Gastrocnemius medialis (tissue), 4 donors: ENCODE measurements at regions of chr6 and their contacts with region 1.

Region 1: GRCh38 chr6:28895134-28895812 is 28.5 kb downstream of the TRIM27 start:
- DNase-seq: peak; percentile 88 to 93
- ATAC-seq: peak; percentile 85 to 88
- H3K4me3 ChIP-seq: peak overlapping the region; percentile 67 to 90 (median 76)
- H3K27ac ChIP-seq: peak overlapping the region; percentile 89 to 98 (median 96)
- H3K4me1 ChIP-seq: peaks cover 7% of the 10 kb centered on the region in 2 donors
- H3K27me3 ChIP-seq: no peaks in the 10 kb centered on the region
- CTCF ChIP-seq: no peak
- POLR2A ChIP-seq: peak; percentile 62 to 64

Region 2: GRCh38 chr6:28349892-28350737 is 545.2 kb before region 1 on chr6 and contains the start of gene ZKSCAN3:
- in situ Hi-C with region 1: no loop called
- intact Hi-C with region 1: loop called (anchors 5 kb)
- DNase-seq: peak; percentile 59 to 75
- ATAC-seq: peak; percentile 91 to 92
- H3K4me3 ChIP-seq: peak within 1 kb of the TSS; percentile 75 to 91 (median 84)
- H3K27ac ChIP-seq: peak within 1 kb of the TSS; percentile 75 to 83 (median 80)
- H3K4me1 ChIP-seq: peaks cover 24 to 48% of the 10 kb centered on the region in 2 donors
- H3K27me3 ChIP-seq: no peaks in the 10 kb centered on the region
- CTCF ChIP-seq: no peak
- POLR2A ChIP-seq: peak in 1 of 2 donors; percentile 17
- total RNA-seq, gene ZKSCAN3: 1.5 to 4.5 (median 2.4) TPM

Region 3: DNA sequence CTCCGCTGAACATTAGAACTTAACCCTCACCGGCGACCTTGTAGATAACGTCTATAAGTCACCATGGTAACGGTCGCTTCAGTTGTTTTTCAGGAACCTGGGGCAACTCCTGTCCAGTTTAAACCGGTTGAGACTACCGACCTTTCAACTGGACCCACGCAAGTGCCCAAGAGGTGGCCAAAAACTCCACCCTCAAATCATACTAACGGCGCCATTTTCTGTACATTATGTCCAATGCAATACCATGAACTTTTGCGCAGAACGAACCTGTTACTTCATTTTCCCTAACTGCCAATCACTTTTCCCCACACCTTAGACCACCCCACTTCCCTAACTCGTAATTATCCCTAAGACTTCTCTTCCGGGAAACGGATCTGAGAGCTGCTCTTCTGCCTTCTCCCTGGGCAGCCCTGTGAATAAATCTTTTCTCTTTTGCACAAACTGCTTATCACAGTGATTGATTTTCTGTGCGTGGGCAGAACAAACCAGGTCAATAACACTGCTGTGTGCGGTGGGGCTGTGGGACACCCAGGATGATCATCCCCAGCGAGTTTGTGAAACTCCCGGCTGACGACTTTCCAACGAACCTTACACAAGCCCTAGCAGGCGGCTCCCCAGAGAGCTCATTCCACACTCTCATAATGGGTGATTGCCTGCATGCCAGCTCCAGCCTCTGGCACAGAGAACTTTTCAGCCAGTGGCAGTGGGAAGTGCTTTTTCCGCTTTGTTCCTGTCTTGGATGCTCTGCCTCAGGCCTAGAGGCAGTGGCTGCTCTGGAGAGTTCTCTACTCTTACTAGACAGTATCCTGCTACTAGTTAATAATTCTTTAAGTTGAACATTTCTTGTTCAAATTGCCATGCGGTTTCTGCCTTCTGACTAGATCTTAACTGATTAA is 341.0 kb before region 1 on chr6:
- in situ Hi-C with region 1: no loop called
- intact Hi-C with region 1: no loop called
- DNase-seq: no peak
- ATAC-seq: no peak
- H3K4me3 ChIP-seq: no peak overlapping the region
- H3K27ac ChIP-seq: no peak overlapping the region
- H3K4me1 ChIP-seq: no peaks in the 10 kb centered on the region
- H3K27me3 ChIP-seq: no peaks in the 10 kb centered on the region
- CTCF ChIP-seq: no peak
- POLR2A ChIP-seq: no peak

Region 4: GRCh38 chr6:28838634-28839442 is 56.4 kb before region 1 on chr6:
- in situ Hi-C with region 1: no loop called
- intact Hi-C with region 1: loop called (anchors 1 kb)
- DNase-seq: peak; percentile 20 to 22
- ATAC-seq: peak; percentile 42 to 63
- H3K4me3 ChIP-seq: peak overlapping the region; percentile 46 to 81 (median 55)
- H3K27ac ChIP-seq: peak overlapping the region in 3 of 4 donors; percentile 8 to 51 (median 28)
- H3K4me1 ChIP-seq: peaks cover 0 to 12% of the 10 kb centered on the region in 2 donors
- H3K27me3 ChIP-seq: peaks cover 19 to 40% (median 20%) of the 10 kb centered on the region in 3 donors
- CTCF ChIP-seq: peak in 2 of 5 experiments; percentile 29 to 43
- POLR2A ChIP-seq: no peak

Region 5: DNA sequence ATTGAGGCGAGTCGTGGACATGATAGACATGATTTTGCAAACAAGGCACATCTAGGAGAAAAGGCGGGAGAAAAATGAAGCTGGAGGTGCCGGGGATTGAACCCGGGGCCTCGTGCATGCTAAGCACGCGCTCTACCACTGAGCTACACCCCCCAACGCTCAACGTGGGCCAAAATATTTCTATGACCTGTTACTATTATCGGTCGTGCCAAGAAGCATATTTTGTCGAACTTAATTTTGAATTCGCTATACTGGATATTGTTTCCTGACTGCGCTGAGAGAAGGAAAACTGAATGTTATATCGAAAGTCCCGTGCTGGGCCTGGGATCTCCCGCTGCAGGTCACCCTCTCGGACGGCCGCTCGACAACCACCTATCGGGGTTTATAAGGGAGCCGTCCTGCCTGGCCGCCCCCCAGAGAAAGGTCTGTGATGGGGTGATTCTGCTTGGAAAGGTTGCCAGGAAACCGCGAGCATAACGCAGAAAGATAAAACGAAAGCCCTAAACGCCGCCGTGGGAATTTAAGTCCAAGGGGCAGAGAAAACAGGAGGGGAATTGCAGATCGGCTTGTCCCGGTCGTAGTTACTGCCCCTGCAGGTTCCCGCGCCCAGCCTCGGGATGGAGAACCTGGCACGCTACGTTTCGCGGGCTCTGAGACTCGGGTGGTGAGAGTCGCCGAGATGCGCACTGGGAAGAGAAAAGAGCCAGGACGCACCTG is 31.5 kb before region 1 on chr6:
- in situ Hi-C with region 1: no loop called
- intact Hi-C with region 1: loop called (anchors 5 kb)
- DNase-seq: peak; percentile 16 to 39
- ATAC-seq: peak; percentile 77
- H3K4me3 ChIP-seq: peak overlapping the region; percentile 61 to 77 (median 72)
- H3K27ac ChIP-seq: peak overlapping the region in 3 of 4 donors; percentile 31 to 43 (median 37)
- H3K4me1 ChIP-seq: peaks cover 0 to 19% of the 10 kb centered on the region in 2 donors
- H3K27me3 ChIP-seq: peaks cover 0 to 35% (median 3%) of the 10 kb centered on the region in 3 donors
- CTCF ChIP-seq: no peak
- POLR2A ChIP-seq: no peak

Region 6: DNA sequence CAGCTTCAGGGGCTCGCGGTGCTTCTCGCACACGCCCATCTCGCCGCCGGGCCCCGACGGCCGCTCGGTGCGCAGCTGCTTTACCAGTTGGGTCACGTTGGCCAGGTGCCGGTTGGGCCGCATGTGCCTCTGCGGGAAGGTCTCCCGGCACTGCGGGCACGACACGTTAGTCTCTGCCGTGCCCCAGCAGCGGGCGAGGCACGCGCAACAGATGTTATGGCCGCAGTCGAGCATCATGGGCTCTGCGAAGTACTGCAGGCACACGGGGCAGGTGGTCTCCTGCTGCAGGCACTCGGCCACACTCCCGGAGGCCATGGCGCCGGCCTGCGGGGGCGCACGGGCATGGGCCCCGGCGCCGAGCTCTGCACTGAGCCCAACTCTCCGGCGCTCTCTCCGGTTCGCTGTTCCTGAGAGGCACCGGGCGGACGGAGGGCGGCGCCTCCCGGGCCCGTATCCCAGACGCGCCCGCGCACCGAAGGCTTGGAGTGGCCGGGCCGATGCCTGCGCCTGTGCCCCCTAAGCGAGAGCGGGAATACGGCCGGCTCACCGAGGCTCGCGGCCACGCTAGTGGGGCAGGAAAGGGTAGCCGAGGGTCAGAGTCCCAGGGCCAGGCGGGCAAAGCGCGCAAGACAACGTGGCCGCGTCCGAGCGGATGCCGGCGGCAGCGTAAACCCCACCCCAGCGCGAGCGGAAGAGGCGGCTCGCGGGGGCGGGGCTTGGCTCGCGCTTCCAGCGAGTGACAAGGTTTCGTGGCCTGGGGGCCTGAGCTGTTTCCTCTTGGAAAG is 28.2 kb after region 1 on chr6 and contains the start of gene TRIM27:
- in situ Hi-C with region 1: no loop called
- intact Hi-C with region 1: loop called (anchors 1 kb)
- DNase-seq: peak; percentile 80 to 81
- ATAC-seq: peak; percentile 91 to 93
- H3K4me3 ChIP-seq: peak within 1 kb of the TSS; percentile 79 to 91 (median 88)
- H3K27ac ChIP-seq: peak within 1 kb of the TSS; percentile 90 to 96 (median 95)
- H3K4me1 ChIP-seq: peaks cover 16% of the 10 kb centered on the region in 2 donors
- H3K27me3 ChIP-seq: no peaks in the 10 kb centered on the region
- CTCF ChIP-seq: peak in 1 of 5 experiments; percentile 24
- POLR2A ChIP-seq: peak; percentile 85 to 89
- total RNA-seq, gene TRIM27: 33.6 to 45.1 (median 36.1) TPM

Region 7: GRCh38 chr6:28940858-28941680 is 45.8 kb after region 1 on chr6:
- in situ Hi-C with region 1: no loop called
- intact Hi-C with region 1: loop called (anchors 1 kb)
- DNase-seq: peak; percentile 38 to 51
- ATAC-seq: peak; percentile 69 to 76
- H3K4me3 ChIP-seq: peak overlapping the region; percentile 52 to 61 (median 58)
- H3K27ac ChIP-seq: peak overlapping the region; percentile 57 to 77 (median 72)
- H3K4me1 ChIP-seq: peaks cover 8 to 12% of the 10 kb centered on the region in 2 donors
- H3K27me3 ChIP-seq: peaks cover 3 to 31% (median 16%) of the 10 kb centered on the region in 3 donors
- CTCF ChIP-seq: no peak
- POLR2A ChIP-seq: no peak

Region 8: GRCh38 chr6:28981833-28982475 is 86.7 kb after region 1 on chr6:
- in situ Hi-C with region 1: no loop called
- intact Hi-C with region 1: loop called (anchors 1 kb)
- DNase-seq: peak; percentile 44 to 74
- ATAC-seq: peak; percentile 80 to 84
- H3K4me3 ChIP-seq: peak overlapping the region; percentile 60 to 70 (median 62)
- H3K27ac ChIP-seq: peak overlapping the region; percentile 57 to 77 (median 66)
- H3K4me1 ChIP-seq: peaks cover 0 to 3% of the 10 kb centered on the region in 2 donors
- H3K27me3 ChIP-seq: peaks cover 3 to 10% (median 9%) of the 10 kb centered on the region in 3 donors
- CTCF ChIP-seq: no peak
- POLR2A ChIP-seq: no peak

Region 9: GRCh38 chr6:29251741-29252140 is 356.5 kb after region 1 on chr6:
- in situ Hi-C with region 1: no loop called
- intact Hi-C with region 1: no loop called
- DNase-seq: no peak
- ATAC-seq: no peak
- H3K4me3 ChIP-seq: no peak overlapping the region
- H3K27ac ChIP-seq: no peak overlapping the region
- H3K4me1 ChIP-seq: no peaks in the 10 kb centered on the region
- H3K27me3 ChIP-seq: no peaks in the 10 kb centered on the region
- CTCF ChIP-seq: no peak
- POLR2A ChIP-seq: no peak